Caco-2 (cell line): ENCODE measurements at regions of chr2 and their contacts with region 1.

Region 1: GRCh38 chr2:63861220-63861822 is 19.6 kb downstream of the UGP2 start:
- DNase-seq: peak; percentile 58 to 71
- H3K4me3 ChIP-seq: no peak overlapping the region
- H3K4me3 Mint-ChIP-seq: no peak overlapping the region
- H3K27ac Mint-ChIP-seq: peak overlapping the region; percentile 85
- H3K4me1 ChIP-seq: peaks cover 32% of the 10 kb centered on the region
- H3K4me1 Mint-ChIP-seq: peaks cover 38% of the 10 kb centered on the region
- H3K27me3 ChIP-seq: no peaks in the 10 kb centered on the region
- H3K27me3 Mint-ChIP-seq: no peaks in the 10 kb centered on the region
- CTCF ChIP-seq: peak; percentile 58 to 71

Region 2: GRCh38 chr2:63588385-63589147 is 272.8 kb before region 1 on chr2 and contains the starts of genes MDH1 and WDPCP:
- CTCF ChIA-PET with region 1: no interaction called
- POLR2A ChIA-PET with region 1: no interaction called
- intact Hi-C with region 1: loop called (anchors 2 kb)
- DNase-seq: peak; percentile 96 to 99
- H3K4me3 ChIP-seq: peak within 1 kb of the TSS; percentile 95
- H3K4me3 Mint-ChIP-seq: peak within 1 kb of the TSS; percentile 92
- H3K27ac Mint-ChIP-seq: peak within 1 kb of the TSS; percentile 96
- H3K4me1 ChIP-seq: 0 out of 2 replicates have a peak, but pooled peaks cover 7% of the 10 kb centered on the region
- H3K4me1 Mint-ChIP-seq: peaks cover 11% of the 10 kb centered on the region
- H3K27me3 ChIP-seq: no peaks in the 10 kb centered on the region
- H3K27me3 Mint-ChIP-seq: no peaks in the 10 kb centered on the region
- CTCF ChIP-seq: no peak
- total RNA-seq, gene MDH1: 159 and 181 TPM in 2 replicates
- total RNA-seq, gene WDPCP: 14.1 and 16.2 TPM in 2 replicates

Region 3: DNA sequence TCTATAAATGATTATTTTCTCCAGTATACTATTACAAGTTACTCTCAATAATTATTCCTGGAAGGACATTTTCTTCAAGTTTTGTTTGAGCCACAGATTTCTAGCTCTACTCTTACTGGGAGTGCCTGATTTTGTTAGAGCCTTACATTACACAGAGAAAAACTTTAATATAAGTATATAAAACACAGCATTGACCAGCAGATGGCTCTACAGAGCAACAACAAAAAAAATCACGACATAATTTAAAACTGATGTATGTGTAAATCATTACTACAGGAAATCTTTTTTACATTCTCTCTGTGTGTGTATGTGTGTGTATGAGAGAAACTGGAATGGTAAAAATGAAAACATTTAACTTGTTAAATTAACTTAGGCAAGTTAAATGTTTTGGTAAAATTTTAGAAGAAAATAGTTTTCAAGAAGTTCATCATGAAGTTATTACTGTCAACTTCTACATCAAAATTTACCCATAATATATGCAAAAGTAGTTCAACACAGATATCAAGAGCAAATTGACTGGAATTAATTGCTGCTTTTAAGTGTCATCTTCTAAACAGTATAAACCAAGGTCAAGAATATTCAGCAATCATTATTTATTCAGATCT is 169.2 kb before region 1 on chr2:
- CTCF ChIA-PET with region 1: interaction called, 7 read pairs
- POLR2A ChIA-PET with region 1: no interaction called
- intact Hi-C with region 1: loop called (anchors 1 kb)
- DNase-seq: peak in 1 of 2 experiments; percentile 48
- H3K4me3 ChIP-seq: no peak overlapping the region
- H3K4me3 Mint-ChIP-seq: no peak overlapping the region
- H3K27ac Mint-ChIP-seq: no peak overlapping the region
- H3K4me1 ChIP-seq: no peaks in the 10 kb centered on the region
- H3K4me1 Mint-ChIP-seq: peaks cover 10% of the 10 kb centered on the region
- H3K27me3 ChIP-seq: no peaks in the 10 kb centered on the region
- H3K27me3 Mint-ChIP-seq: no peaks in the 10 kb centered on the region
- CTCF ChIP-seq: peak; percentile 51 to 56

Region 4: GRCh38 chr2:63827749-63828148 is 33.6 kb before region 1 on chr2:
- CTCF ChIA-PET with region 1: interaction called, 7 read pairs
- POLR2A ChIA-PET with region 1: no interaction called
- intact Hi-C with region 1: loop called (anchors 1 kb)
- DNase-seq: peak; percentile 86 to 90
- H3K4me3 ChIP-seq: no peak overlapping the region
- H3K4me3 Mint-ChIP-seq: peak overlapping the region; percentile 77
- H3K27ac Mint-ChIP-seq: peak overlapping the region; percentile 93
- H3K4me1 ChIP-seq: peaks cover 43% of the 10 kb centered on the region
- H3K4me1 Mint-ChIP-seq: peaks cover 54% of the 10 kb centered on the region
- H3K27me3 ChIP-seq: no peaks in the 10 kb centered on the region
- H3K27me3 Mint-ChIP-seq: no peaks in the 10 kb centered on the region
- CTCF ChIP-seq: no peak

Region 5: GRCh38 chr2:63888490-63889402 is 27.4 kb after region 1 on chr2:
- CTCF ChIA-PET with region 1: interaction called, 4 read pairs
- POLR2A ChIA-PET with region 1: no interaction called
- intact Hi-C with region 1: loop called (anchors 2 kb)
- DNase-seq: peak; percentile 53 to 72
- H3K4me3 ChIP-seq: no peak overlapping the region
- H3K4me3 Mint-ChIP-seq: no peak overlapping the region
- H3K27ac Mint-ChIP-seq: peak overlapping the region; percentile 13
- H3K4me1 ChIP-seq: no peaks in the 10 kb centered on the region
- H3K4me1 Mint-ChIP-seq: no peaks in the 10 kb centered on the region
- H3K27me3 ChIP-seq: no peaks in the 10 kb centered on the region
- H3K27me3 Mint-ChIP-seq: no peaks in the 10 kb centered on the region
- CTCF ChIP-seq: peak; percentile 91 to 93